MCF 10A (cell line): ENCODE measurements at regions of chr11 and their contacts with region 1.

Region 1: GRCh38 chr11:129895126-129896041 is at the start of gene NFRKB:
- DNase-seq: peak; percentile 80
- H3K4me3 Mint-ChIP-seq: peak within 1 kb of the TSS; percentile 81
- H3K27ac Mint-ChIP-seq: peak within 1 kb of the TSS; percentile 70
- H3K4me1 Mint-ChIP-seq: peaks cover 10% of the 10 kb centered on the region
- H3K27me3 Mint-ChIP-seq: no peaks in the 10 kb centered on the region
- CTCF ChIP-seq: no peak
- total RNA-seq, gene NFRKB: 34.0 and 37.4 TPM in 2 replicates

Region 2: GRCh38 chr11:129846501-129847335 is 48.7 kb before region 1 on chr11:
- CTCF ChIA-PET with region 1: no interaction called
- POLR2A ChIA-PET with region 1: interaction called, 22 read pairs
- intact Hi-C with region 1: no loop called
- DNase-seq: peak; percentile 80
- H3K4me3 Mint-ChIP-seq: peak overlapping the region; percentile 56
- H3K27ac Mint-ChIP-seq: peak overlapping the region; percentile 88
- H3K4me1 Mint-ChIP-seq: peaks cover 12% of the 10 kb centered on the region
- H3K27me3 Mint-ChIP-seq: no peaks in the 10 kb centered on the region
- CTCF ChIP-seq: no peak

Region 3: GRCh38 chr11:129853518-129854236 is 41.7 kb before region 1 on chr11:
- CTCF ChIA-PET with region 1: no interaction called
- POLR2A ChIA-PET with region 1: interaction called, 17 read pairs
- intact Hi-C with region 1: no loop called
- DNase-seq: peak; percentile 91
- H3K4me3 Mint-ChIP-seq: peak overlapping the region; percentile 2
- H3K27ac Mint-ChIP-seq: peak overlapping the region; percentile 80
- H3K4me1 Mint-ChIP-seq: peaks cover 37% of the 10 kb centered on the region
- H3K27me3 Mint-ChIP-seq: no peaks in the 10 kb centered on the region
- CTCF ChIP-seq: no peak

Region 4: DNA sequence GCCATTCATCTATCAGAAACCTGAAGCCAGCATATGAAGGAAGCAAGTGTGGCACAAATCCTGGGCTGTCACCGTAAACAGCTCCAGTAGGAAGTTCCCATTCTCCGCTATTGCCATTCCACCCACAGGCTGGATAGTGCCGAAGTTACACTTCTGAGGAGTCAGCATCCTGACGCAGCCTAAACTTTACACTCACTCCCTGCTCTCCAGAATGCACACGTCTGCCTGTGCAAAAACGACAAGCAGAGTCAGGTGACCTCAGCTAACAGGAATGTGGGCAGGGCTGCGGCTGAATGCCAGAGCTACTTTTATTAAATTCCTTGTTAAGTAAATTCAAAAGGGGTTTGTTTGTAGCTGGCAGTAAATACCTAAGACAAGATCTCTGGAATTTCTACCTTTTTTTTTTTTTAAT is 33.7 kb before region 1 on chr11:
- CTCF ChIA-PET with region 1: interaction called, 4 read pairs
- POLR2A ChIA-PET with region 1: interaction called, 32 read pairs
- intact Hi-C with region 1: no loop called
- DNase-seq: peak; percentile 89
- H3K4me3 Mint-ChIP-seq: peak overlapping the region; percentile 62
- H3K27ac Mint-ChIP-seq: peak overlapping the region; percentile 86
- H3K4me1 Mint-ChIP-seq: peaks cover 13% of the 10 kb centered on the region
- H3K27me3 Mint-ChIP-seq: no peaks in the 10 kb centered on the region
- CTCF ChIP-seq: no peak

Region 5: GRCh38 chr11:129880311-129880710 is 15.1 kb before region 1 on chr11:
- CTCF ChIA-PET with region 1: interaction called, 6 read pairs
- POLR2A ChIA-PET with region 1: interaction called, 16 read pairs
- intact Hi-C with region 1: no loop called
- DNase-seq: no peak
- H3K4me3 Mint-ChIP-seq: no peak overlapping the region
- H3K27ac Mint-ChIP-seq: no peak overlapping the region
- H3K4me1 Mint-ChIP-seq: no peaks in the 10 kb centered on the region
- H3K27me3 Mint-ChIP-seq: no peaks in the 10 kb centered on the region
- CTCF ChIP-seq: no peak

Region 6: GRCh38 chr11:129946256-129946655 is 50.9 kb after region 1 on chr11:
- CTCF ChIA-PET with region 1: no interaction called
- POLR2A ChIA-PET with region 1: no interaction called
- intact Hi-C with region 1: no loop called
- DNase-seq: no peak
- H3K4me3 Mint-ChIP-seq: no peak overlapping the region
- H3K27ac Mint-ChIP-seq: no peak overlapping the region
- H3K4me1 Mint-ChIP-seq: no peaks in the 10 kb centered on the region
- H3K27me3 Mint-ChIP-seq: no peaks in the 10 kb centered on the region
- CTCF ChIP-seq: no peak

Region 7: DNA sequence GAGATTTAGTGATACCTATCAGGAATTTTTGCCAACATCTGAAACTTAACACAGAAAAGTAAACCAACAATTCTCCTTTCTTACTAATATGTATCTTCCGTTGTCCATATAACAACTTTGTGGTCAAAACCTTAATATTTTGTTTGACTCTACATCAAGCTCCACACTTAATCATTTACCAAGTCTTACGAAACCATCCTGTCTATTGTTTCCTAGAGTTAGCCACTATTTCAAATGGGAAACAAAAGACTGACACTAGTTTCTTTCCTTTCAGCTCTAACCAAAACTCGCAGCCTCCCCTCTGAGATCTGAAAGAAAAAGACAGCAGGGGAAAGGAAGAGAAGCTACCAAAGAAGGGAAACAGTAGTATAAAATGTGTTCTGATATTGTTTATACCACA is 133.8 kb after region 1 on chr11:
- CTCF ChIA-PET with region 1: no interaction called
- POLR2A ChIA-PET with region 1: no interaction called
- intact Hi-C with region 1: no loop called
- DNase-seq: peak; percentile 31
- H3K4me3 Mint-ChIP-seq: no peak overlapping the region
- H3K27ac Mint-ChIP-seq: no peak overlapping the region
- H3K4me1 Mint-ChIP-seq: peaks cover 11% of the 10 kb centered on the region
- H3K27me3 Mint-ChIP-seq: no peaks in the 10 kb centered on the region
- CTCF ChIP-seq: no peak

Region 8: GRCh38 chr11:130159657-130160497 is 264.5 kb after region 1 on chr11 and contains the start of gene ST14:
- CTCF ChIA-PET with region 1: no interaction called
- POLR2A ChIA-PET with region 1: interaction called, 12 read pairs
- intact Hi-C with region 1: no loop called
- DNase-seq: peak; percentile 79
- H3K4me3 Mint-ChIP-seq: peak within 1 kb of the TSS; percentile 76
- H3K27ac Mint-ChIP-seq: peak within 1 kb of the TSS; percentile 63
- H3K4me1 Mint-ChIP-seq: peaks cover 30% of the 10 kb centered on the region
- H3K27me3 Mint-ChIP-seq: peaks cover 17% of the 10 kb centered on the region
- CTCF ChIP-seq: no peak
- total RNA-seq, gene ST14: 24.8 and 27.2 TPM in 2 replicates